K562 (cell line): ENCODE measurements at regions of chr15 and their contacts with region 1.

Region 1: DNA sequence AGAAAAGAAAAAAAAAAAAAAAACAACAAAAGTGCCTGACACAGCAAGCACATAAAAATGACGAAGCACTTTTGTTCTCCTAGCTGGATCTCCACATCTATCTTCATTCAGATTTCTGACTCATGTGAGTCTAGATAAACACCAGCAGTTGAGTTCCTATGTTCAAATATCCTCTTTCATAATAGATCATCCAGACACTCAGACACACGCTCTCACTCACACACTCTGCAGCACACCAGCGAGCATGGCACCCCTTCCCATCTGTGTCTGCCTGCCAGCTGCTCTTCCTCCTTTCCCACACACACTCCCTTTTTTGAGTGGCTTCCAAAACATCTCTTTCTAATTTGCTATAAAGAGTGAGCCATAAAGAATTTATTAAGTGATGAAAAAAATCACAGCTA is 19.8 kb upstream of the CELF6 start:
- DNase-seq: peak in 2 of 4 experiments; percentile 22 to 34
- ATAC-seq: peak; percentile 68; the same call in 2 of the 3 replicates
- H3K4me3 ChIP-seq: no peak overlapping the region
- H3K27ac ChIP-seq: peak overlapping the region; percentile 14; the same call in 1 of the 3 replicates
- H3K4me1 ChIP-seq: peaks cover 3 to 5% of the 10 kb centered on the region in 2 experiments; a peak in 3 of 5 replicates
- H3K27me3 ChIP-seq: no peaks in the 10 kb centered on the region
- CTCF ChIP-seq: no peak
- EP300 ChIP-seq: 0 out of 2 replicates have a peak, but pooled peaks have one; percentile 10
- POLR2A ChIP-seq: no peak
- RAD21 ChIP-seq: no peak

Region 2: GRCh38 chr15:71939981-71940588 is 399.7 kb before region 1 on chr15:
- CTCF ChIA-PET with region 1: no interaction called
- POLR2A ChIA-PET with region 1: no interaction called
- in situ Hi-C with region 1: no loop called
- intact Hi-C with region 1: no loop called
- DNase-seq: no peak
- ATAC-seq: no peak
- H3K4me3 ChIP-seq: no peak overlapping the region
- H3K27ac ChIP-seq: no peak overlapping the region
- H3K4me1 ChIP-seq: no peaks in the 10 kb centered on the region
- H3K27me3 ChIP-seq: no peaks in the 10 kb centered on the region
- CTCF ChIP-seq: no peak
- EP300 ChIP-seq: no peak
- POLR2A ChIP-seq: no peak
- RAD21 ChIP-seq: no peak

Region 3: GRCh38 chr15:72515591-72516389 is 176.0 kb after region 1 on chr15:
- CTCF ChIA-PET with region 1: no interaction called
- POLR2A ChIA-PET with region 1: no interaction called
- in situ Hi-C with region 1: no loop called
- intact Hi-C with region 1: no loop called
- DNase-seq: no peak
- ATAC-seq: no peak
- H3K4me3 ChIP-seq: no peak overlapping the region
- H3K27ac ChIP-seq: no peak overlapping the region
- H3K4me1 ChIP-seq: no peaks in the 10 kb centered on the region; a peak in 1 of 5 replicates
- H3K27me3 ChIP-seq: no peaks in the 10 kb centered on the region
- CTCF ChIP-seq: no peak
- EP300 ChIP-seq: no peak
- POLR2A ChIP-seq: no peak
- RAD21 ChIP-seq: no peak

Region 4: GRCh38 chr15:72585476-72586082 is 245.8 kb after region 1 on chr15:
- CTCF ChIA-PET with region 1: no interaction called
- POLR2A ChIA-PET with region 1: no interaction called
- in situ Hi-C with region 1: loop called (anchors 10 kb)
- intact Hi-C with region 1: no loop called
- DNase-seq: no peak
- ATAC-seq: peak; percentile 52; the same call in 1 of the 3 replicates
- H3K4me3 ChIP-seq: no peak overlapping the region
- H3K27ac ChIP-seq: no peak overlapping the region
- H3K4me1 ChIP-seq: no peaks in the 10 kb centered on the region
- H3K27me3 ChIP-seq: no peaks in the 10 kb centered on the region
- CTCF ChIP-seq: peak; percentile 4 to 33 (median 27); a peak in 2 of 6 replicates
- EP300 ChIP-seq: no peak
- POLR2A ChIP-seq: no peak
- RAD21 ChIP-seq: peak; percentile 28 to 32